ENCODE measurements at regions of chr14 and their contacts with region 1.

Region 1: DNA sequence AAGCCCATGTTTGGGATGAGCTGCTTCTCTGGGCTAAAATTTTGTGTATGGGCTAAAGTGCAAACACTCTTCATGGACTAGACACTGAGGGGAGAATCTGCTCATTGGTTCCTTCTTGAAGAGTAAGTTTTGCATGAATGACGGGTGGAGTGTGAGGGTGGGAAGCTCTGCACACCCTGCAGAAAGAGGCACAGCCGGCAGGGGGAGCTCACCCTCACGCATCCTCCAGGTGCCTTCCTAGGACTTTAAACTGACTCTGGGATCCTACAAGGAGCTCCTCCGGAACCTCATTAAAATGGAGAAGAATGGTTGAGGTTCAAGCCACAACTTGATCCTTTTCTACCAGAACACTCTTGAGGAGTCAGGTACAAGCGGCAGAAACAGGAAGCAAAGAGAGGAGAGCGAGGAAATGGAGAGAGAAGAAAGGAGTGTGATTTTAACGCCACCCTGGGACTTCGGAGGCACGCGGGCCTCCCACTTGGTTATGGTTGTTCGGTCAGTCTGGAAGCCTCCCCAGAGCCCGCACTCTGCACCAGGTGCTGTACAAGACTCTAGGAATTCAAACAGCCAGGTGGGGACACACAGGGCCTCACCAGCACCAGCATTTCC is 87.5 kb downstream of the SETD3 start:
- DNase-seq: peak; percentile 46
- ATAC-seq: peak; percentile 60
- H3K4me3 Mint-ChIP-seq: no peak overlapping the region
- H3K27ac Mint-ChIP-seq: no peak overlapping the region
- H3K4me1 Mint-ChIP-seq: peaks cover 11% of the 10 kb centered on the region
- H3K27me3 Mint-ChIP-seq: no peaks in the 10 kb centered on the region
- CTCF ChIP-seq: peak; percentile 75

Region 2: GRCh38 chr14:99378782-99379214 is 14.4 kb before region 1 on chr14:
- CTCF ChIA-PET with region 1: interaction called, 16 read pairs
- POLR2A ChIA-PET with region 1: interaction called, 4 read pairs
- intact Hi-C with region 1: no loop called
- DNase-seq: no peak
- ATAC-seq: no peak
- H3K4me3 Mint-ChIP-seq: no peak overlapping the region
- H3K27ac Mint-ChIP-seq: no peak overlapping the region
- H3K4me1 Mint-ChIP-seq: peaks cover 4% of the 10 kb centered on the region
- H3K27me3 Mint-ChIP-seq: peaks cover 12% of the 10 kb centered on the region
- CTCF ChIP-seq: no peak

Region 3: DNA sequence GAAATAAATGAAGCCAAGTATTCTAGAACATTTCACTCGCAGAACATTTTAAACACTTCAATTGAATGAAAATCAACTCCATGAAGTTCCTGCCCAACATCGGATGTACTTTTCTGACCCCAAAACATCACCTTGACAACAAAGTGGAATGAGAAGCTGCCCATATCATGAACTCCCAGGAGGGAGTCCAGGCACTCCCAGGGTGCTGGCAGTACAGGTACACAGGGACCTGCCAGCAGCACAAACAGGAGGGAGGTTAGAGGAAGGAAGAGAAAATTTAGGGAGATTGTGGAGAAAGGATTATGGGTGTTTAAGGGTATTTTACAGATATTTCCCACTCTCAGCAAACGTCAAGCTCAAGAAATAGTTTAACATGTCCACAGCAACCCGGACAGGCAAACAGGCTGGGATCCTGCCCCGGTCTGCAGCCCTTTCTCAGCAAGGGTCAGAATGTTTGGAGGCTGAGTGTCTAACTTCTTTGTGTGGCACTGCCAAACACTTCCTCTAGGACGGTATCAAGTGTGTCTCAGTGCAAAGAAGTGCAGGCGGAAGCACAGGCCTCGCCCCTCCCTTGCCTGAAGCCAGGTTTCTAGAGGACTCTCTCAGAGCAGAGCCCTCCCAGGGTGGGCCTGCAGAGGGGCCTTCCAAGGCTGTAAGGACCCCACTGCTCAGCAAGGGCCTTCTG is 15.3 kb after region 1 on chr14:
- CTCF ChIA-PET with region 1: interaction called, 145 read pairs
- POLR2A ChIA-PET with region 1: interaction called, 5 read pairs
- intact Hi-C with region 1: no loop called
- DNase-seq: no peak
- ATAC-seq: no peak
- H3K4me3 Mint-ChIP-seq: no peak overlapping the region
- H3K27ac Mint-ChIP-seq: no peak overlapping the region
- H3K4me1 Mint-ChIP-seq: peaks cover 15% of the 10 kb centered on the region
- H3K27me3 Mint-ChIP-seq: no peaks in the 10 kb centered on the region
- CTCF ChIP-seq: no peak

Region 4: GRCh38 chr14:99415496-99416281 is 22.5 kb after region 1 on chr14:
- CTCF ChIA-PET with region 1: interaction called, 145 read pairs
- POLR2A ChIA-PET with region 1: interaction called, 5 read pairs
- intact Hi-C with region 1: no loop called
- DNase-seq: peak; percentile 71
- ATAC-seq: peak; percentile 98
- H3K4me3 Mint-ChIP-seq: no peak overlapping the region
- H3K27ac Mint-ChIP-seq: no peak overlapping the region
- H3K4me1 Mint-ChIP-seq: peaks cover 24% of the 10 kb centered on the region
- H3K27me3 Mint-ChIP-seq: no peaks in the 10 kb centered on the region
- CTCF ChIP-seq: peak; percentile 84

Region 5: GRCh38 chr14:99436247-99437180 is 43.4 kb after region 1 on chr14:
- CTCF ChIA-PET with region 1: interaction called, 12 read pairs
- POLR2A ChIA-PET with region 1: no interaction called
- intact Hi-C with region 1: no loop called
- DNase-seq: no peak
- ATAC-seq: peak; percentile 73
- H3K4me3 Mint-ChIP-seq: no peak overlapping the region
- H3K27ac Mint-ChIP-seq: peak overlapping the region; percentile 78
- H3K4me1 Mint-ChIP-seq: peaks cover 29% of the 10 kb centered on the region
- H3K27me3 Mint-ChIP-seq: no peaks in the 10 kb centered on the region
- CTCF ChIP-seq: no peak